Aorta (tissue), 5 donors: ENCODE measurements at regions of chr11 and their contacts with region 1.

Region 1: DNA sequence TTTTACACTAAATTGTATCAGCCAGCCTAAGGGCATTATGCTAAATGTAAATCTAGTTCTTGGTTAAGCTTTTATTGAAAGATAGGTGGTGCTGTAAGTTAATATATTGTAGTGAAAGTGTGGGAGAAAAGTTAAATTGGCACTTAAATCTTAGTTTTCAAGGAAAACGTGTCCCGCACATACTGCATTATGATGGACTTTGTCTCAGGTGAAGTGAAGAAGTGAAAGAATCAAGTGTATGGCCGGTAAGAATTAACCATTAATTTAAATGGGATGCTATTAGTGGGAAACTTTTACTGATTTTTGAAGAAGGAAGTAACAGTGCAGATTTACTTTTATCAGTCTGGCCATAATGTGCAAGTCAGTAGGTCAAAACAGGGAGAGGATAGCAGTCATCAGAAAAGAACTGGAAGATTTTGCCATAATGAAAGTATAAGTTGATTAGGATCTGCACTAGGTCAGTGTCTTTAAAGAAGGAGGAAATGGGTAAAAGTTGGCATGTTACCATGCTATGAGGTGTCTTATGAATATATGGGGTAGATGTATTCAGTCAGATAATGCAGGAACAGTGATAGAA is 81.6 kb downstream of the PDHX start:
- DNase-seq: no peak
- ATAC-seq: peak; percentile 67
- H3K4me3 ChIP-seq: no peak overlapping the region
- H3K27ac ChIP-seq: no peak overlapping the region
- H3K4me1 ChIP-seq: no peaks in the 10 kb centered on the region
- H3K27me3 ChIP-seq: no peaks in the 10 kb centered on the region

Region 2: DNA sequence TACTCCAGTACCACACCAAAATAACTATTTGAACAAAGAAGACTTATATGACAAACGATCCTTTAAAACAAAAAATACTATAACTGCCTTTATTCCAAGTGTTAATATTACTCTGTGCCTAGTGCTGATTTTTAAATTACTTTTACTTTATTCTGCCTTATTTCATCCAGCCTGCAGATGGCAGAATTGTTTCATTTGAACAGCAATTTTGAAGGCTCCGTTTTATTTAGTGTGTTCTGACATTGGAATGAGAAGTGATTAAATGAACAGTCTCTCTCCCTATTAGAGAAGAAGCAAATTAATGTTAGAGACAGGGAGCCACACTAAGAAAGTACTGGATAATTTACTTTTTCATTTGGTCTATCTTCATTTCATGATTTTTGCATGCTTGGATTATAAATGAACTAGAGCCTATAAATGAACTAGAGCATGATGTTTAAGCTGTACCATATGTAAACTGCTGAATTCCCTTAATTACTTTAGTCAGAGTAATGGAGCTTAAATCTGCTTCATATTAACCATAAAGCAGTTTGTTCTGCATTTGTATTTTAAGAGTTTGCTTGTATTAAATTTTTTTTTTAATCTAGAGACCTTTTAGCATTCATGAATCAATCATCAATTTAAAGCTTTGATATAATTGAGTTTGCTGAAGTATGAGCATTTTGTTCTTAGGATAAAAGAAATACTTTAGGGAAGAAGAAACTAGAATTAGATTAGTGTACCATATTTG is 71.8 kb before region 1 on chr11:
- intact Hi-C with region 1: loop called in 1 of 2 experiments (anchors 5 kb)
- DNase-seq: no peak
- ATAC-seq: no peak
- H3K4me3 ChIP-seq: no peak overlapping the region
- H3K27ac ChIP-seq: no peak overlapping the region
- H3K4me1 ChIP-seq: peaks cover 2 to 7% of the 10 kb centered on the region in 2 donors
- H3K27me3 ChIP-seq: no peaks in the 10 kb centered on the region

Region 3: DNA sequence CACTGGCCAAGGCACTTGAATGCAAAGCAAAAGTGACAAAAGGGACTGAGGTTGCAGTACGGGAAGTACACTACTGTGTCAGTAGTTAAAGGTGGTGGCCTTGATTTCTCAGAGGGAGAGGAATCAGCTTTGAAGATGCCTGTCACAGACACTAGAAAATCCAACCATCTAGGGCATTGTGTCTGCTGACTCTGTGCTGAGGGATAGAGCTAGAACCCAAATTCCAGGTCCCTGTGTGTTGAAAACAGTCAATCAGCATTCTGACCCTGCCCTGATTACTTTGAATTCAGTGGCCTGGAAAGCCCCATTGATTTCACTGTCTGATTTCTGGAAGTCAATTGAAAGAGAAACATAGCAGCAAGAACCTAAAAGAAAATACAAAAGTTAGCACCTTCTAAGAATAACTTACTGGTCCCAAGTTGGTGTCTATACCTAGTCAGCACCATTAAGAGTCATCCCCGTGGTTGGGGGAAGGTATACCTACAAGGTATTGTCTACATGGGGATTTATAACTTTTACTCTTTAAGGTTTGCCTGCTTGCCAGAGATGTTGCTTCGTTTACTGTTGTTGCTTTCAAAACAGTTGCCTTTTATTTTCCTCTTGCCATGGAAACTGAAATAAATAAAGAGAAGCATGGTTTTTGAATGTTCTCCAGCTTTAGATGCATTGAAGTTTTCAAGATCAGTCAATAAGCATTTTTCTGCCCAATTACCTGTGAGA is 15.6 kb after region 1 on chr11:
- intact Hi-C with region 1: no loop called
- DNase-seq: no peak
- ATAC-seq: no peak
- H3K4me3 ChIP-seq: no peak overlapping the region
- H3K27ac ChIP-seq: no peak overlapping the region
- H3K4me1 ChIP-seq: no peaks in the 10 kb centered on the region
- H3K27me3 ChIP-seq: no peaks in the 10 kb centered on the region

Region 4: GRCh38 chr11:35087648-35088047 is 89.6 kb after region 1 on chr11:
- intact Hi-C with region 1: no loop called
- DNase-seq: no peak
- ATAC-seq: peak; percentile 2
- H3K4me3 ChIP-seq: no peak overlapping the region
- H3K27ac ChIP-seq: peak overlapping the region; percentile 61 to 84
- H3K4me1 ChIP-seq: peaks cover 3 to 11% of the 10 kb centered on the region in 2 donors
- H3K27me3 ChIP-seq: no peaks in the 10 kb centered on the region